Mammary epithelial cell (primary cell): ENCODE measurements at regions of chr14 and their contacts with region 1.

Region 1: GRCh38 chr14:81220830-81221578 is at the start of gene GTF2A1:
- DNase-seq: peak; percentile 95
- H3K4me3 ChIP-seq: peak within 1 kb of the TSS; percentile 83 to 100 (median 92)
- H3K27ac ChIP-seq: peak within 1 kb of the TSS; percentile 97
- H3K4me1 ChIP-seq: peaks cover 10% of the 10 kb centered on the region
- H3K27me3 ChIP-seq: no peaks in the 10 kb centered on the region
- CTCF ChIP-seq: no peak
- total RNA-seq, gene GTF2A1: 26.3 to 30.9 TPM

Region 2: GRCh38 chr14:81170104-81170828 is 50.7 kb before region 1 on chr14:
- CTCF ChIA-PET with region 1: no interaction called
- dilution Hi-C with region 1: no loop called
- in situ Hi-C with region 1: no loop called
- intact Hi-C with region 1: loop called (anchors 5 kb)
- DNase-seq: peak; percentile 83
- H3K4me3 ChIP-seq: peak overlapping the region; percentile 59 to 67 (median 65)
- H3K27ac ChIP-seq: peak overlapping the region; percentile 71
- H3K4me1 ChIP-seq: peaks cover 11% of the 10 kb centered on the region
- H3K27me3 ChIP-seq: no peaks in the 10 kb centered on the region
- CTCF ChIP-seq: peak; percentile 82 to 93

Region 3: GRCh38 chr14:81315341-81315740 is 94.3 kb after region 1 on chr14:
- CTCF ChIA-PET with region 1: no interaction called
- dilution Hi-C with region 1: no loop called
- in situ Hi-C with region 1: no loop called
- intact Hi-C with region 1: loop called (anchors 10 kb)
- DNase-seq: no peak
- H3K4me3 ChIP-seq: no peak overlapping the region
- H3K27ac ChIP-seq: peak overlapping the region; percentile 88
- H3K4me1 ChIP-seq: peaks cover 58% of the 10 kb centered on the region
- H3K27me3 ChIP-seq: no peaks in the 10 kb centered on the region
- CTCF ChIP-seq: no peak

Region 4: GRCh38 chr14:81533536-81534343 is 312.7 kb after region 1 on chr14 and contains the start of gene SEL1L:
- CTCF ChIA-PET with region 1: no interaction called
- dilution Hi-C with region 1: no loop called
- in situ Hi-C with region 1: no loop called
- intact Hi-C with region 1: loop called (anchors 5 kb)
- DNase-seq: peak; percentile 100
- H3K4me3 ChIP-seq: peak within 1 kb of the TSS; percentile 71 to 94 (median 81)
- H3K27ac ChIP-seq: peak within 1 kb of the TSS; percentile 63
- H3K4me1 ChIP-seq: peaks cover 6% of the 10 kb centered on the region
- H3K27me3 ChIP-seq: no peaks in the 10 kb centered on the region
- CTCF ChIP-seq: no peak
- total RNA-seq, gene SEL1L: 64.3 to 85.9 TPM